A549 (cell line): ENCODE measurements at regions of chr12 and their contacts with region 1.

Region 1: GRCh38 chr12:103930034-103930786 is at the start of gene HSP90B1:
- DNase-seq: peak; percentile 100
- ATAC-seq: peak; percentile 86 to 92
- H3K4me3 ChIP-seq: peak within 1 kb of the TSS; percentile 93
- H3K27ac ChIP-seq: peak within 1 kb of the TSS; percentile 92 to 94
- H3K4me1 ChIP-seq: peaks cover 35% of the 10 kb centered on the region
- CTCF ChIP-seq: no peak
- EP300 ChIP-seq: no peak
- POLR2A ChIP-seq: peak; percentile 96
- RAD21 ChIP-seq: no peak
- polyA plus RNA-seq, gene HSP90B1: 694 and 915 TPM in 2 replicates

Region 2: GRCh38 chr12:103698752-103699560 is 231.3 kb before region 1 on chr12:
- CTCF ChIA-PET with region 1: no interaction called
- POLR2A ChIA-PET with region 1: no interaction called
- DNase-seq: no peak
- ATAC-seq: peak; percentile 26 to 35; a peak in 3 of 6 replicates
- H3K4me3 ChIP-seq: no peak overlapping the region
- H3K27ac ChIP-seq: no peak overlapping the region
- H3K4me1 ChIP-seq: no peaks in the 10 kb centered on the region
- CTCF ChIP-seq: no peak
- EP300 ChIP-seq: no peak
- POLR2A ChIP-seq: no peak
- RAD21 ChIP-seq: no peak

Region 3: DNA sequence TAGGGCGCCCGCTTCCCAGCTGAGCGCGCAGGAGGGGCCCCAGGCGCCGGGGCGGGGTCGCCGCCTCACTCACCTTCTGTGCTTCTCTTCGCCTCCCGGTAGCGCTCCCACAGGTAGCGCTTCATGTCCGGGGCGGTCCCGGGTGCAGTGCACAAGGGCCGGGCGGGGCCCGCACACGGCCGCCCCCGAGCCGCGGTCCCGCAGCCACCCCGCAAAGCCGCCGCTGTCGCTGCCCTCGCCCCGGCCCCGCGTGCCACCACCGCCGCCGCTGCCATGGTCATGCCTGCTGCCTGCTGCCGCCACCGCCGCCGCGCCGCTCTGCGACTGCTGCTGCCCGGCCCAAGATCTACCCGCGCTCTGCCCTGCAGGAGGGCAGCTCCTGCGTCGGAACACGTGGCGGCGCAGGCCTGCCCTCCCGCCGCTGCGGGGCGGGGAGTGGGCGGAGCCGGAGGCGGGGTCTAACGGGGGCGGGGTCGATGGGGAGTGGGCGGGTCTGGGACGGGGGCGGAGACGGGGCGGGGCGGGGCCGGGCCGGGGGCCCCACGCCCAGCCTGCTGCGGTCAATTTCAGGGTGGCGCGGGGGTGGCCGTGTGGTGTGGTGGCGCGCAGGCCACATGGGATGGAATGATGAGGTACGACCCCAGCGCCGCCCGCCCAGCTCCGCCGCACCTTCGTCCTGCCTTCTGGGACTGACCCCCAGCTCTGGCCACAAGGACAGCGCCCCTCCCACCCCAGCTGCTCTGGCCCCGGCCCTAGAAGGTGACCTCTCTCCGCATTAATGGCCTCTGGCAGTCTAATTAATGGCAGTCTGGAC is 89.1 kb before region 1 on chr12 and contains the start of gene NT5DC3:
- CTCF ChIA-PET with region 1: no interaction called
- POLR2A ChIA-PET with region 1: interaction called, 14 read pairs
- DNase-seq: peak; percentile 62 to 91
- ATAC-seq: peak; percentile 82 to 88
- H3K4me3 ChIP-seq: peak within 1 kb of the TSS; percentile 98
- H3K27ac ChIP-seq: peak within 1 kb of the TSS; percentile 93 to 97
- H3K4me1 ChIP-seq: peaks cover 25% of the 10 kb centered on the region
- CTCF ChIP-seq: no peak
- EP300 ChIP-seq: no peak
- POLR2A ChIP-seq: peak; percentile 97
- RAD21 ChIP-seq: 0 out of 5 replicates have a peak, but pooled peaks of 1 of the 2 experiments have one; percentile 20
- polyA plus RNA-seq, gene NT5DC3: 5.2 and 8.8 TPM in 2 replicates

Region 4: DNA sequence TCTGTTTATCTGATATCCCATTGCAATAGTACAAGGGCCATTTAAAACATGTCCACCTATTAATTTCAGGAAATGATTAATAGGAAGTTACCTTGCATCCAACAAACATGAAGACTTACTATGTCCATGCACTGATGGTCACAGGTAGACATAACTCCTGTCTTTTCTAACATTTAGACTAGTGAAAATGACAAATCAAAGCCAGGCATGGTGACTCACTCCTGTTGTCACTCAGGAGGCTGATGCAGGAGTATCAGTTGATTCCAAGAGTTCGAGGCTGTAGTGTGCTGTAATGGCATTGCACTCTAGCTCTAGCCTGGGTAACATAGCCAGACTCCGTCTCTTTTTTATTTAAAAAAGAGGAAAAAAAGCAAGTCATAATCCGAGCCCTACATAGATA is 14.8 kb after region 1 on chr12:
- CTCF ChIA-PET with region 1: interaction called, 4 read pairs
- POLR2A ChIA-PET with region 1: interaction called, 24 read pairs
- DNase-seq: no peak
- ATAC-seq: no peak
- H3K4me3 ChIP-seq: no peak overlapping the region
- H3K27ac ChIP-seq: no peak overlapping the region
- H3K4me1 ChIP-seq: no peaks in the 10 kb centered on the region
- CTCF ChIP-seq: no peak
- EP300 ChIP-seq: no peak
- POLR2A ChIP-seq: no peak
- RAD21 ChIP-seq: no peak

Region 5: GRCh38 chr12:103956516-103957027 is 26.4 kb after region 1 on chr12:
- CTCF ChIA-PET with region 1: interaction called, 3 read pairs
- POLR2A ChIA-PET with region 1: interaction called, 20 read pairs
- DNase-seq: no peak
- ATAC-seq: peak; percentile 60 to 70; a peak in 5 of 6 replicates
- H3K4me3 ChIP-seq: peak overlapping the region; percentile 73
- H3K27ac ChIP-seq: peak overlapping the region; percentile 92 to 95
- H3K4me1 ChIP-seq: peaks cover 27% of the 10 kb centered on the region
- CTCF ChIP-seq: no peak
- EP300 ChIP-seq: no peak
- POLR2A ChIP-seq: no peak
- RAD21 ChIP-seq: no peak

Region 6: GRCh38 chr12:103965590-103966504 is 35.6 kb after region 1 on chr12 and contains the start of gene TDG:
- CTCF ChIA-PET with region 1: no interaction called
- POLR2A ChIA-PET with region 1: interaction called, 43 read pairs
- DNase-seq: peak; percentile 95 to 100
- ATAC-seq: peak; percentile 99
- H3K4me3 ChIP-seq: peak within 1 kb of the TSS; percentile 79
- H3K27ac ChIP-seq: peak within 1 kb of the TSS; percentile 93 to 94
- H3K4me1 ChIP-seq: peaks cover 29% of the 10 kb centered on the region
- CTCF ChIP-seq: no peak
- EP300 ChIP-seq: no peak
- POLR2A ChIP-seq: peak; percentile 71
- RAD21 ChIP-seq: peak in 1 of 2 experiments; percentile 31; a peak in 1 of 5 replicates
- polyA plus RNA-seq, gene TDG: 48.2 and 65.4 TPM in 2 replicates